Activated CD4-positive, alpha-beta T cell treated with anti-CD3 and anti-CD28 coated beads, Interleukin-2, amount 10 ng/mL, durations not matched to agents 24 days and 14 days (primary cell): ENCODE measurements at regions of chr3 and their contacts with region 1.

Region 1: GRCh38 chr3:172595641-172596393 is 72.6 kb upstream of the TNFSF10 start:
- DNase-seq: peak; percentile 87
- H3K4me3 Mint-ChIP-seq: peak overlapping the region; percentile 80
- H3K27ac Mint-ChIP-seq: peak overlapping the region; percentile 68
- H3K4me1 Mint-ChIP-seq: peaks cover 57% of the 10 kb centered on the region
- H3K27me3 Mint-ChIP-seq: peaks cover 3% of the 10 kb centered on the region

Region 2: DNA sequence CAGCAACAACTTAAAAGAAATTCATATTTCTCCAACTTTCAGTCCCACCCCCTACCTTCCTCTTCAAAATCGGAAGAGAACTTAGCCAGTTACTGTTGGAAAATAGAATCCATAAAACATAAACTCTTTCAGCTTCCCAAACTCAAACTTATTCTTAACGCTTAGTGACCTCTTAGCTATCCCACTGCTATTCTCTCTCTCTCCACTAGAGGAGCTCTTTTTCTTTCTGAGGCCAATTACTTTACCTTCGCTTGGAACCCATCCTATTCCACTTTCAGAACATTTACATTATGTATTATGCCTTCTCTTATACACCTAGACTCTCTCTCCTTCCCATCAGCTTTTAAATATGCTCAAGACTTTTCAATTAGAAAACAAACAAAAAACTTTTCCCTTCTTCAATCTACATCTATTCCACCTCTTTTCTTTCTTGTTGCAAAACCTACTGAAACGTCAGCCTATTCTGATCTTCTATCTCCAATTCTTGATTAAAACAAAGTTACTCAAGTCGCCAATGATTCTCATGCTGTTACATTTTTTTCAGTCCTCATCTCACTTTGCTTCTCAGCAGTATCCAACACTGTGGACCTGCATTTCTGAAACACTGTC is 134.2 kb before region 1 on chr3:
- intact Hi-C with region 1: loop called (anchors 1 kb)
- DNase-seq: no peak
- H3K4me3 Mint-ChIP-seq: no peak overlapping the region
- H3K27ac Mint-ChIP-seq: no peak overlapping the region
- H3K4me1 Mint-ChIP-seq: peaks cover 6% of the 10 kb centered on the region
- H3K27me3 Mint-ChIP-seq: peaks cover 7% of the 10 kb centered on the region

Region 3: GRCh38 chr3:172471903-172472302 is 123.9 kb before region 1 on chr3:
- intact Hi-C with region 1: no loop called
- DNase-seq: no peak
- H3K4me3 Mint-ChIP-seq: no peak overlapping the region
- H3K27ac Mint-ChIP-seq: no peak overlapping the region
- H3K4me1 Mint-ChIP-seq: peaks cover 8% of the 10 kb centered on the region
- H3K27me3 Mint-ChIP-seq: peaks cover 20% of the 10 kb centered on the region

Region 4: GRCh38 chr3:172522871-172523818 is 72.7 kb before region 1 on chr3 and contains the start of gene TNFSF10:
- intact Hi-C with region 1: loop called (anchors 1 kb)
- DNase-seq: peak; percentile 94
- H3K4me3 Mint-ChIP-seq: peak within 1 kb of the TSS; percentile 87
- H3K27ac Mint-ChIP-seq: peak within 1 kb of the TSS; percentile 94
- H3K4me1 Mint-ChIP-seq: peaks cover 43% of the 10 kb centered on the region
- H3K27me3 Mint-ChIP-seq: no peaks in the 10 kb centered on the region
- total RNA-seq, gene TNFSF10: 71.5 and 77.5 TPM in 2 replicates

Region 5: DNA sequence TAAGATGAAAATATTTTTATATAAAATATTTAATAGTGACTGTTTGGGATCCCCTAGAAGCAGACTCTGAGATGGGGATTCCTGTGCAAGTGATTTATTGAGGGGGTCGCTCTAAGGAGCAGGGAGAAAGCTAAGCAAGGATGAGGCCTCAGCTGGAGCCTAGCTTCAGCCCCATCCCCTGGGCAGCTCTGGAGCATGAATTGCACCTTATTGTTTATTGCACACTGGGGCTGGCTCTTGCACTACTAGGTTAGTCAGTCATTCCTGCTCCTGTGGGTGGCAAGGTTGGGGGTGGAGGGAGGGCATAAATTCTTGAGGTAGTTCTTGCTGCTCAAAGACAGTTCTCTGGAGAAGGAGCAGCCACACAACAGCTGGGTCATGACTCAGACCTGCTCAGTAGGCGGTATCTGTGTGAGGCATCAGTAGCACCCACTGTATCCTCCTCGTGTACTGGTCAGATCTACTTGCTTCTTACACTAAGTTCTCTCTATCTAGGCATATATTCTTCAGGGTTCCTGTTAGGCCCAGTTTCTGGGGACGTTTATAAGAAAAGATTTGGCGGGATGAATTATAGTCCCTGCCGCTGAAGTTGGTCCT is 45.4 kb before region 1 on chr3:
- intact Hi-C with region 1: loop called (anchors 1 kb)
- DNase-seq: peak; percentile 87
- H3K4me3 Mint-ChIP-seq: peak overlapping the region; percentile 37
- H3K27ac Mint-ChIP-seq: peak overlapping the region; percentile 82
- H3K4me1 Mint-ChIP-seq: peaks cover 58% of the 10 kb centered on the region
- H3K27me3 Mint-ChIP-seq: no peaks in the 10 kb centered on the region

Region 6: GRCh38 chr3:172562871-172563863 is 32.6 kb before region 1 on chr3:
- intact Hi-C with region 1: loop called (anchors 1 kb)
- DNase-seq: peak; percentile 79
- H3K4me3 Mint-ChIP-seq: peak overlapping the region; percentile 65
- H3K27ac Mint-ChIP-seq: peak overlapping the region; percentile 85
- H3K4me1 Mint-ChIP-seq: peaks cover 42% of the 10 kb centered on the region
- H3K27me3 Mint-ChIP-seq: no peaks in the 10 kb centered on the region

Region 7: GRCh38 chr3:172622916-172623700 is 27.3 kb after region 1 on chr3:
- intact Hi-C with region 1: loop called (anchors 2 kb)
- DNase-seq: peak; percentile 83
- H3K4me3 Mint-ChIP-seq: peak overlapping the region; percentile 52
- H3K27ac Mint-ChIP-seq: no peak overlapping the region
- H3K4me1 Mint-ChIP-seq: peaks cover 10% of the 10 kb centered on the region
- H3K27me3 Mint-ChIP-seq: no peaks in the 10 kb centered on the region

Region 8: DNA sequence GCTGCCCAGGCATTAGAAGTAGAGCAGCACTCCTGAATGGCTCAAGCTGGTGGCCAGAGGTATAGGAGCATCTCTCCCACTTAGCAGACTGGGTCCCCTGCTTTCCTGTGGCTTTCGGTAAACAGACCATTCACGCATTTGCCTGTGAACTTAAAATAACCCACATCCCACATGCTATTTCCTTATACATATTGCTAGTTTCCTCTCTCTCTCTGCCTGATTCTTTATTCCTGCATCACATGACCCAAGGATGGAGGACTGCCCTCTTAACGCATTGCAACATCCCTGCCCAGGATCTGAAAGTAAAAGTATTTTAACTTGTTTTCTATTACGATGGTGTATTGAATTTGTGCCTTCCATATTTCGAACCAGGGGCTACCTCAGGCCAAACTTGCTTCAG is 758.3 kb after region 1 on chr3:
- intact Hi-C with region 1: no loop called
- DNase-seq: no peak
- H3K4me3 Mint-ChIP-seq: no peak overlapping the region
- H3K27ac Mint-ChIP-seq: no peak overlapping the region
- H3K4me1 Mint-ChIP-seq: no peaks in the 10 kb centered on the region
- H3K27me3 Mint-ChIP-seq: no peaks in the 10 kb centered on the region